MCF 10A (cell line): ENCODE measurements at regions of chr6 and their contacts with region 1.

Region 1: GRCh38 chr6:41092421-41093140 is 19.8 kb downstream of the NFYA start:
- DNase-seq: peak; percentile 37
- H3K4me3 Mint-ChIP-seq: no peak overlapping the region
- H3K27ac Mint-ChIP-seq: no peak overlapping the region
- H3K4me1 Mint-ChIP-seq: no peaks in the 10 kb centered on the region
- H3K27me3 Mint-ChIP-seq: no peaks in the 10 kb centered on the region
- CTCF ChIP-seq: peak; percentile 29

Region 2: GRCh38 chr6:41103847-41104246 is 11.3 kb after region 1 on chr6:
- CTCF ChIA-PET with region 1: interaction called, 12 read pairs
- POLR2A ChIA-PET with region 1: interaction called, 3 read pairs
- intact Hi-C with region 1: no loop called
- DNase-seq: no peak
- H3K4me3 Mint-ChIP-seq: no peak overlapping the region
- H3K27ac Mint-ChIP-seq: no peak overlapping the region
- H3K4me1 Mint-ChIP-seq: no peaks in the 10 kb centered on the region
- H3K27me3 Mint-ChIP-seq: no peaks in the 10 kb centered on the region
- CTCF ChIP-seq: no peak

Region 3: DNA sequence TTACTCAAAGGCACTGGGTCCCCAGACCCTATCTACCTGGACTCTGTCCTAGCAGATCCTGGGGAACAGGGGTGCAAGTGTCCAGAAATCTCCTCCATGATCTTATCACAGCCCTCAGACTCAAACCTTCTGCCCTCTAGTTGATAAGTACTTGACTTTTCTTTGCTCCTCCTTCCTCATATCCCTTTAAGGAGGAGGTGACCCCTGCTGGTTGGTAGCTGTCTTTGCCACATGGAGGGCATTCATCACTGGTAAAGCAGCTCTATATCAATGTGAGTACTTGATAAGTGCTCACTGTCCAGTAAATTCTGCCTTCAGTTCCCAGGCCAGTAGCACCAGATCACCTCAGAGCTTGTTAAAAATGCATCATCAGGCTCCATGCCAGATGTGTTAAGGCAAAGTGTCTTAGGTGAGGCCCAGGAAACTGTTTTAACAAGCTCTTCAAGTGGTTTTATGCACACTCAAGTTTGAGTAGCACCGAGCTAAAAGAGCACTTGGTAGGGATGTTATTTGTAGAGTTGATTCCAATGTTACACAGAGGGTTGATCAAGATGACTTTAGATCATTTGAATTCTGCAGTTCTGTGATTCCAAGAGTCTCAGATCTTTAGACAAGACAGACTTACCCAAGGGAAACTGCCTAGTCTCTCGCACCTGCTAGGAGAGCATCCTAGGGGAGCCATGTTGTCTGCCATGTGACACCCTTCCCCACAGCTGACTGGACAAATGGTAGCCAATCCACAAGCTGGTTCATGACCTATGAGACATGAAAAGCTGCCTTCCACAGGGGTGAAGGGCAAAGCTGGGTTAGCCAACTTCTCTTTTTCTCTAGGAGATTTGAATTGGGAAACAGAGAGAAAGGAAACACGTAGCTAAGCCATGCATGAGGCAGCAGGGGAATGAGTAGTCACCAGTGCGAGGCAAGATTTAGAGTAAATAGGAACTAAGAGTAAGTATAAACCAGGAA is 89.8 kb after region 1 on chr6:
- CTCF ChIA-PET with region 1: interaction called, 13 read pairs
- POLR2A ChIA-PET with region 1: no interaction called
- intact Hi-C with region 1: loop called (anchors 1 kb)
- DNase-seq: peak; percentile 70
- H3K4me3 Mint-ChIP-seq: no peak overlapping the region
- H3K27ac Mint-ChIP-seq: no peak overlapping the region
- H3K4me1 Mint-ChIP-seq: no peaks in the 10 kb centered on the region
- H3K27me3 Mint-ChIP-seq: peaks cover 17% of the 10 kb centered on the region
- CTCF ChIP-seq: peak; percentile 56